Calu3 (cell line): ENCODE measurements at regions of chr13 and their contacts with region 1.

Region 1: GRCh38 chr13:101452519-101453485 is at the start of gene ITGBL1:
- DNase-seq: no peak
- H3K4me3 Mint-ChIP-seq: no peak within 1 kb of the TSS
- H3K27ac Mint-ChIP-seq: peak within 1 kb of the TSS; percentile 53
- H3K4me1 Mint-ChIP-seq: peaks cover 15% of the 10 kb centered on the region
- H3K27me3 Mint-ChIP-seq: no peaks in the 10 kb centered on the region
- CTCF ChIP-seq: no peak
- total RNA-seq, gene ITGBL1: not detected in 2 replicates

Region 2: DNA sequence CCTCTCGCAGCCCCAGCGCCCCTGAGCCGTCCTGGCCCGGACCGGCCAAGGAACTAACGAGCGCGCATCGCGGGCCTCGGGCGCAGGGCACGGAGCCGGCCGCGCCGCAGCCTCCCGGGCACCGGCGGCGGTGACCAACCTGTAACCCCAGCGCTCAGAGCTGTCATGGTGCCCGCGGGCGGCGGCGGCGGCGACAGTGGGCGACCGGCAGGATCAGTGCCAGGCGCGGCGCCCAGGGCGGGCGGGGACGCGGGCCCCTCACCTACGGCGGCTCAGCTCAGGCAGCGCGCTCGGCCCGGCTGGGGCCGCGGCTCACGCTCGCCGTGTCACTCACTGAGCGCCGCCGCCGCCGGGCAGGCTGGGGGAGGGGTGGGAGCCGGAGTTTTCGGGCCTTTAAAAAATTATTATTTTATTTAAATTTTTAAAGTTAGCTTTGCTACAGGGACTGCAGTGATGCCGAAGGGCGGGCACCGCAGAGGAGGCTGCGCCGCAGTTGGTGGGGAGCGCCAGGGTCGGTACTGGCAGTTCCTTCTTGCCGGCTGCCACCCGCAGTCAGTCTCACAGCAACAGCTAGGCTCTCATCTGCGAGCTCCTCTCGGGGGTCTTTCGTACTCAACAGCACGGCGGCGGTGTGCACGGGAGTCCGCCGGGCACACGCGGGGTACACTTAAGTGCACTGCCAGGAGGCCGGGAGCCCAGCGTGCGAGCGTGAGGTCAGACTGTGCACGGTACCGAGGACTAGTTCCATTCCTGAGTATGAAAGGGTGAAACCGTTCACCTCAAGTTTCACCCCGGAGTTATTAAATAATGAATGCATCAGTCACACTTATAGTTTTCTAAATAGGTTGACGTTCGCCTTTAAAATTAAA is 36.4 kb before region 1 on chr13 and contains the start of gene NALCN:
- CTCF ChIA-PET with region 1: no interaction called
- intact Hi-C with region 1: loop called (anchors 5 kb)
- DNase-seq: peak; percentile 23
- H3K4me3 Mint-ChIP-seq: peak within 1 kb of the TSS; percentile 60
- H3K27ac Mint-ChIP-seq: no peak within 1 kb of the TSS
- H3K4me1 Mint-ChIP-seq: no peaks in the 10 kb centered on the region
- H3K27me3 Mint-ChIP-seq: no peaks in the 10 kb centered on the region
- CTCF ChIP-seq: no peak
- total RNA-seq, gene NALCN: 2.0 and 2.8 TPM in 2 replicates